ENCODE measurements at regions of chr11 and their contacts with region 1.

Region 1: DNA sequence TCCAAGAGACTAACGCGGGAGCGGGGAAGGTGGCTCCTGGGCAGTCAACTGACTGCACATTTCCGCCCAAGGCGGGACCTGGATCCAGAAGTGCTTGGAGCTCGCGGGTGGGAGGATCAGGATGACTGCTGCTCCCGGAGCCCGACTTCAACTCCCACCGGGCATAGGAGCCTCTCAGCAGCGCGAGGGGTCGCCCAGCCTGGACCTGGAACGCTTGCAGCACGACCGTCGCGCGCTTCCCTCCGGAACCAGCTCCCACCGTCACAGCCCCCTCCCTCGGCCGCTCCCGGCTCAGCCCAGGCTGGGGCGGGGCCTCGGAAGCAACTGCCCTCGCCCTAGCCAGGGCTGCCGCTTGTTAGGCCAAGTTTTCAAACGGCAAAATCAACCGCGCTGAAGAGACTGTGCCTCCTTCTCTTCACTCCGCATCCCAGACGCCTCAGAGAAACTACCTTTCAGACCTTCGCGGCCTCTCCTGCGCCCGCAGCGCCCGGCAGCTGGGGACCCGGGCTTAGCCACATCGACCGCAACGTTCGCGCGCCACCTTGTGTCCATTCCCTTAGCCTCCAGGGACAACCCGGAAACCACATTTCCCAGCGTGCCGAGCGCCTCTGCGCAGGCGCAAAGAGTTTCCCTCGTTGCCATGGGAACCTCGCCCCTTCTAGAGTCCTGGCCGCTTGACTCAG is 14.0 kb downstream of the SSH3 start:
- DNase-seq: peak; percentile 94 to 99
- ATAC-seq: peak; percentile 88 to 90
- H3K4me3 ChIP-seq: peak overlapping the region; percentile 69
- H3K27ac ChIP-seq: peak overlapping the region; percentile 91 to 95
- H3K4me1 ChIP-seq: peaks cover 12% of the 10 kb centered on the region
- CTCF ChIP-seq: peak; percentile 97
- EP300 ChIP-seq: no peak
- POLR2A ChIP-seq: peak; percentile 88
- RAD21 ChIP-seq: peak; percentile 92 to 98

Region 2: DNA sequence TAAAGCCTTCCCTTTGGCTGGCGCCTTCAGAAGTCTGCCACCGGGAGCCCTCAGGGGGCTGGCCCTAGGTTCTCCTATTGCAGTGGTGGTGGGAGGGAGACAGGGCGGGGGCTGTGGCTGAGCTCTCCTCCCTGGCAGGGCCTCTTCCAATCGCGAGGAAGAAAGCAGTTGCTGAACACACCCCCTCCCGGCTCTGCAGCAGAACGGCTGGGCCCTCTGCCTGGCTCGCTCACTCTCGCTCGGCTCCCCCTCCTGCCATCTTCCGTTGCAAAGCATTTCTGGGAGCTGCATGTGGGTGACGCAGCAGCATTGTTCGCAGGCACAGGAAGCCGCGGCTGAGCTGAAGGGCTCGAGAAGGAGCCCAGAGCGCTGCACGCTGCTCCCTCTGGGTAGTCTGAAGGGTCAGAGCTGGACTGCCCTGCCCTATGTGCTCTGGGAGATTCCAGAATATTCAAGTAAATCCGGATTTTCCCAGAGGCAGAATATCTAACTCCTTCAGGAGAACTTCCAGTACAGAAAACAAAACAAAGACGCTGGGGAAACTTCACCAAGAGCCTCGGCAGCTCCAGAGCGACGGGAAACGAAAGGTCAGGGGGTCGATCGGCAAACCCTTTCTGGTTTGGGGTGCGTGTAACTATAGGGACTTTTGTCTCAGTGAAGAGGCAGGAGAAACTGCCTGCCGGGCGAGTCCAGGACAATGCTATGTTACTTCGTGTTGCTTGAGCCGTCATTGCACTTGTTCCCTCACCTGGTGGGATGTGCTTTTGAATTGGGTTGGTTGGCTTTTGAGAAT is 77.4 kb before region 1 on chr11:
- CTCF ChIA-PET with region 1: interaction called, 8 read pairs
- POLR2A ChIA-PET with region 1: interaction called, 10 read pairs
- DNase-seq: peak; percentile 93 to 97
- ATAC-seq: peak; percentile 96 to 98
- H3K4me3 ChIP-seq: peak overlapping the region; percentile 69
- H3K27ac ChIP-seq: peak overlapping the region; percentile 80 to 89
- H3K4me1 ChIP-seq: peaks cover 28% of the 10 kb centered on the region
- CTCF ChIP-seq: no peak
- EP300 ChIP-seq: no peak
- POLR2A ChIP-seq: peak; percentile 98
- RAD21 ChIP-seq: no peak

Region 3: DNA sequence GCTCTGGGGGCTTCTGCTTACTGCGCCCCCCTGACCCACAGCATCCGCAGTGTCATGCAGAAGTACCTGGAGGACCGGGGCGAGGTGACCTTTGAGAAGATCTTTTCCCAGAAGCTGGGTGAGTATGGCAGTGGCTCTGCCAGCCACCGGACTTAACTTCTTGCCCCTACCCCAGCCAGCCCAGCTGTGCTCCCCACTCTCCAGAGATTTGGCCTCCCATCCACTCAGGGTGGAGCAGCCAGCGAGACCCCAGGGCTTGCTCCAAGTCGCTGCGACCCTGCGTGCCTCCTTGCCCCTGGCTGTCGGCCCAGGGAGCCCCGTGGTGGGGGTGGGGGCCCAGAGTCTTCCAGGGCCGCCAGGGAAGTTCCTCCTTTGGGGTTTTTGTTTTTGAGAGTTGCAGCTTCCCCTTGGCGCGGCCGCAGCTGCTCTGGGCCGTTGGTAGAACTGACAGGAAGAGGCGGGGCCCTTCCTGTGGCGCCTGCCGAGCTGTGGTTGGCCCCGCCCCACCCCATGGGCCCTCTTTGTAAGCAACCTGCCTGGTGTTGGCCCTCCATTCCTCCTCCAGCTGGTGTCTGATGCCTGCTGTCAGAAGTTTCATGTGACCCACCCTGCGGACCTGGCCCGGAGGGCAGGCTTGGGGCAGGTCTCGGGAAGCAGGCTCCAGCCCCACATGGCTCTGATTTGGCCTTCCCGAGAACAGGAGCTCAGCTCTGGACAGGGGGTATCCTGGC is 40.0 kb before region 1 on chr11:
- CTCF ChIA-PET with region 1: interaction called, 34 read pairs
- POLR2A ChIA-PET with region 1: no interaction called
- DNase-seq: no peak
- ATAC-seq: peak in 1 of 2 experiments; percentile 45; a peak in 3 of 6 replicates
- H3K4me3 ChIP-seq: no peak overlapping the region
- H3K27ac ChIP-seq: peak overlapping the region in 1 of 2 experiments; percentile 67; a peak in 3 of 6 replicates
- H3K4me1 ChIP-seq: peaks cover 4% of the 10 kb centered on the region; the same call in 1 of the 3 replicates
- CTCF ChIP-seq: no peak
- EP300 ChIP-seq: no peak
- POLR2A ChIP-seq: no peak
- RAD21 ChIP-seq: no peak

Region 4: DNA sequence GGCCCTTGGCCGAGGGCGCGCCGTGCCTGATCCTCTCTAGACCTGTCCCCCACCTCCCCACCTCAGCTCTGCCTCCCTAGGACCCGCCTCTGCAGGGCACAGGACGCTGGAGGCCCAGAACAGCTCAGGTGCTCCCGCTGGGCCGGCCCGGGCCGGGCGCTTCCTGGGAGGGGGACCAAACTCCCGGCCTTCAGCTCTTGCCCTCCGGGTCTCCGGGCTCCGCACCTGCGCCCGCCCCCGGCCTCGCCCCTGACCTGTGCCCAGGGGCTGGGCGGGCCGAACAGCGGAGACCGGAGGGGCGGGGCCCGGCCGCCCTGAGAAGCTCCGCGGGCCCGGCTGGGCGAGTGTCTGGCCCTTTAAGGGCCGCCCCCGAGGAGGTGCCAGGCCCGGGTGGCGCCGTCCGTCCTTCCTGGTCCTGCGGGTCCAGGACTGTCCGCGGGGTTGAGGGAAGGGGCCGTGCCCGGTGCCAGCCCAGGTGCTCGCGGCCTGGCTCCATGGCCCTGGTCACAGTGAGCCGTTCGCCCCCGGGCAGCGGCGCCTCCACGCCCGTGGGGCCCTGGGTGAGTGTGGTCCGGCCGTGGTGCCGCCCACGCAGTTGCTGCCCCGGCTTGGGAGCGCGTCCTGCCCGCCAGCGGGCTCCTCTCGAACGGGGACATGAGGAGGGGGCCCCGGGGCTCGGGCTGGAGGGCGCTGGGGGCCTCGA is 14.1 kb before region 1 on chr11 and contains the start of gene SSH3:
- CTCF ChIA-PET with region 1: interaction called, 42 read pairs
- POLR2A ChIA-PET with region 1: interaction called, 8 read pairs
- DNase-seq: peak; percentile 71 to 74
- ATAC-seq: peak; percentile 85 to 91
- H3K4me3 ChIP-seq: peak within 1 kb of the TSS; percentile 93
- H3K27ac ChIP-seq: peak within 1 kb of the TSS; percentile 93 to 94
- H3K4me1 ChIP-seq: peaks cover 22% of the 10 kb centered on the region; the same call in 2 of the 3 replicates
- CTCF ChIP-seq: no peak
- EP300 ChIP-seq: no peak
- POLR2A ChIP-seq: peak; percentile 65
- RAD21 ChIP-seq: no peak
- polyA plus RNA-seq, gene SSH3: 13.7 and 13.9 TPM in 2 replicates

Region 5: GRCh38 chr11:67345920-67346799 is 28.8 kb after region 1 on chr11:
- CTCF ChIA-PET with region 1: interaction called, 54 read pairs
- POLR2A ChIA-PET with region 1: interaction called, 12 read pairs
- DNase-seq: peak; percentile 83 to 97
- ATAC-seq: peak; percentile 84 to 90
- H3K4me3 ChIP-seq: no peak overlapping the region
- H3K27ac ChIP-seq: peak overlapping the region; percentile 65 to 82
- H3K4me1 ChIP-seq: peaks cover 62% of the 10 kb centered on the region
- CTCF ChIP-seq: peak; percentile 96
- EP300 ChIP-seq: peak; percentile 23 to 54; a peak in 1 of 5 replicates
- POLR2A ChIP-seq: no peak
- RAD21 ChIP-seq: peak; percentile 88

Region 6: GRCh38 chr11:67468835-67469811 is 151.8 kb after region 1 on chr11 and contains the start of gene TMEM134:
- CTCF ChIA-PET with region 1: no interaction called
- POLR2A ChIA-PET with region 1: no interaction called
- DNase-seq: peak; percentile 81 to 94
- ATAC-seq: peak; percentile 75 to 78
- H3K4me3 ChIP-seq: peak within 1 kb of the TSS; percentile 67
- H3K27ac ChIP-seq: peak within 1 kb of the TSS; percentile 83 to 97
- H3K4me1 ChIP-seq: peaks cover 28% of the 10 kb centered on the region
- CTCF ChIP-seq: peak; percentile 53
- EP300 ChIP-seq: no peak
- POLR2A ChIP-seq: peak; percentile 73
- RAD21 ChIP-seq: peak; percentile 54 to 74
- polyA plus RNA-seq, gene TMEM134: 18.1 and 18.8 TPM in 2 replicates